ENCODE measurements at regions of chr1 and their contacts with region 1.

Region 1: DNA sequence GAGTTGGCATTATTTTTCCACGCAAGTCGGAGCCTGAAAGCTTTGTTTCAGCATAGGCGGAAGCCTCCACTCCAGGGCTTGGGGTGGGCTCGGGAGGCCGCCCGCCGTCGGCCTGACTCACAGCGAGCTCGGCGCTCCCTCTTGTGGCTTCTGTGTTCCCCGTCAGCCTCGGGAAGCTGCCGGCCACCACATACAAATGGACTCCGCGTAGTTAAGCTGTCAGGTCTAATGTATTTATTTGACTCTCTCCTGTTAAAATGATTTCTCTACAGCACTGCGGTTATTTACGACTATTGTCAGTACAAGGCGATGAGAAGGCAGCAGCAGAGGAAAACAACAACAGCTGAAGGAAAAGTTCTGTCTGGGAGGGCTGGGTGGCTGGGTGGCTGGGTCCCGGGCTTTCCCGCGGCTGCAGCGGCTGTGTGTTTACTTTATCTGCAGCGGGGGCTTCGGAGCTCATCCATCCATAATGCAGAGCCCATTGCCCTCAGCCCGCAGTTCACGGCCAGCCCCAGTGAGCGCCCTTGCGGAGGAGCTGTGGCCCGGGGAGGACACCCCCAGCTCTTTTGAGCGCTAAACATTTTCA is 375.7 kb upstream of the CAMK1G start:
- DNase-seq: peak; percentile 62 to 82
- H3K4me3 ChIP-seq: peak overlapping the region; percentile 24 to 61 (median 50); a peak in 6 of 8 replicates
- H3K27ac ChIP-seq: no peak overlapping the region
- H3K4me1 ChIP-seq: peaks cover 0 to 10% (median 5%) of the 10 kb centered on the region in 4 experiments; a peak in 6 of 7 replicates
- H3K27me3 ChIP-seq: peaks cover 0 to 7% (median 3%) of the 10 kb centered on the region in 4 experiments; a peak in 3 of 7 replicates
- CTCF ChIP-seq: peak; percentile 83 to 91 (median 89)
- EP300 ChIP-seq: no peak
- POLR2A ChIP-seq: no peak
- RAD21 ChIP-seq: peak; percentile 96

Region 2: GRCh38 chr1:208397286-208397685 is 810.5 kb before region 1 on chr1:
- CTCF ChIA-PET with region 1: no interaction called
- POLR2A ChIA-PET with region 1: no interaction called
- DNase-seq: no peak
- H3K4me3 ChIP-seq: no peak overlapping the region
- H3K27ac ChIP-seq: no peak overlapping the region
- H3K4me1 ChIP-seq: no peaks in the 10 kb centered on the region
- H3K27me3 ChIP-seq: no peaks in the 10 kb centered on the region
- CTCF ChIP-seq: no peak
- EP300 ChIP-seq: no peak
- POLR2A ChIP-seq: no peak
- RAD21 ChIP-seq: no peak

Region 3: DNA sequence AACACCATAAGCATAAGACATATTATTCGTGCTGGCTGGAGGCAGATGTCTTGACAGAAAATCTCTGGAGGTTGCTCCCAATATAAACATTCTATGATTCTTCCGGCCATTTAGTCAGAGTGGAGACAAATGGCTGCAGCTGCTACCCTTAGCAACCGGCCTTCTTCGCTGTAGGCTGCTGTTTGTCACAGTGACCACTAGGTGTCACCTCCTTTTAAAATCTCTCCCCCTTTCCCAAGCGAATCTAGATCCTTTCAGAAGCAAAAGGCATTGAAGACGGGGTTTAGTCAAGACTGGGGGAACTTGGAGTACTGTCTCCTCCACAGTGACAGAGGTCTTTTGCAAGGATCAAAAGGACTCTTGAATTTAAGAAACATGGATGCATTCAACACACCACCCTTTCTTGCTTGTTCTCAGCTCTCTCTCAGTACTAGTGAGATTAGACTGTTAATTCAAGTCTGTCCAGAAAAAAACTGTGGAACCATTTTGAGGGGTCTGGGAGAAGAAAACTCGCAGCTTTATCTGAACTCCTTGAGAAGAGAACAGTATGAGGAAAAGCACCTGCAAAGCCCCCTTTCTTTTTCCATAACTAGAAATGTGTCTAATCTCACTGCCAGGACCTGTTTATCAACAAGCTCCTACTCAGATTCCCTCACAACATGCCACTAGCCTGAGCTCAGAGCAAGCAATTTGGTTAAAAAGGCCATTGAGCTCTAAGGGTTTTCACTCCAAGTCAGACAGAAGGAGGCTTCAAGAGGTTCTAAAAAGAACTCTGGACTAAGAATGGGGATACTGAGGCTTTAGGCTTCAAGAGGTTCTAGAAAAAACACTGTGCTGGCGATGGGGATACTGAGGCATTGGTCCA is 555.3 kb before region 1 on chr1:
- CTCF ChIA-PET with region 1: interaction called, 13 read pairs
- POLR2A ChIA-PET with region 1: no interaction called
- DNase-seq: peak; percentile 25 to 53
- H3K4me3 ChIP-seq: no peak overlapping the region
- H3K27ac ChIP-seq: no peak overlapping the region
- H3K4me1 ChIP-seq: no peaks in the 10 kb centered on the region
- H3K27me3 ChIP-seq: no peaks in the 10 kb centered on the region; a peak in 1 of 7 replicates
- CTCF ChIP-seq: peak; percentile 59 to 89 (median 66)
- EP300 ChIP-seq: no peak
- POLR2A ChIP-seq: no peak
- RAD21 ChIP-seq: peak; percentile 80 to 81

Region 4: GRCh38 chr1:209076688-209077087 is 131.1 kb before region 1 on chr1:
- CTCF ChIA-PET with region 1: interaction called, 23 read pairs
- POLR2A ChIA-PET with region 1: no interaction called
- DNase-seq: peak in 1 of 2 experiments; percentile 29
- H3K4me3 ChIP-seq: no peak overlapping the region
- H3K27ac ChIP-seq: no peak overlapping the region
- H3K4me1 ChIP-seq: peaks cover 0 to 5% (median 3%) of the 10 kb centered on the region in 4 experiments; a peak in 4 of 7 replicates
- H3K27me3 ChIP-seq: no peaks in the 10 kb centered on the region
- CTCF ChIP-seq: peak; percentile 28 to 77 (median 63)
- EP300 ChIP-seq: no peak
- POLR2A ChIP-seq: no peak
- RAD21 ChIP-seq: peak; percentile 83 to 86

Region 5: GRCh38 chr1:209190591-209191261 is 17.1 kb before region 1 on chr1:
- CTCF ChIA-PET with region 1: interaction called, 36 read pairs
- POLR2A ChIA-PET with region 1: no interaction called
- DNase-seq: peak; percentile 68 to 84
- H3K4me3 ChIP-seq: no peak overlapping the region
- H3K27ac ChIP-seq: no peak overlapping the region
- H3K4me1 ChIP-seq: peaks cover 0 to 12% (median 6%) of the 10 kb centered on the region in 4 experiments; a peak in 4 of 7 replicates
- H3K27me3 ChIP-seq: no peaks in the 10 kb centered on the region
- CTCF ChIP-seq: peak; percentile 89 to 98 (median 95)
- EP300 ChIP-seq: no peak
- POLR2A ChIP-seq: no peak
- RAD21 ChIP-seq: peak; percentile 94 to 95

Region 6: DNA sequence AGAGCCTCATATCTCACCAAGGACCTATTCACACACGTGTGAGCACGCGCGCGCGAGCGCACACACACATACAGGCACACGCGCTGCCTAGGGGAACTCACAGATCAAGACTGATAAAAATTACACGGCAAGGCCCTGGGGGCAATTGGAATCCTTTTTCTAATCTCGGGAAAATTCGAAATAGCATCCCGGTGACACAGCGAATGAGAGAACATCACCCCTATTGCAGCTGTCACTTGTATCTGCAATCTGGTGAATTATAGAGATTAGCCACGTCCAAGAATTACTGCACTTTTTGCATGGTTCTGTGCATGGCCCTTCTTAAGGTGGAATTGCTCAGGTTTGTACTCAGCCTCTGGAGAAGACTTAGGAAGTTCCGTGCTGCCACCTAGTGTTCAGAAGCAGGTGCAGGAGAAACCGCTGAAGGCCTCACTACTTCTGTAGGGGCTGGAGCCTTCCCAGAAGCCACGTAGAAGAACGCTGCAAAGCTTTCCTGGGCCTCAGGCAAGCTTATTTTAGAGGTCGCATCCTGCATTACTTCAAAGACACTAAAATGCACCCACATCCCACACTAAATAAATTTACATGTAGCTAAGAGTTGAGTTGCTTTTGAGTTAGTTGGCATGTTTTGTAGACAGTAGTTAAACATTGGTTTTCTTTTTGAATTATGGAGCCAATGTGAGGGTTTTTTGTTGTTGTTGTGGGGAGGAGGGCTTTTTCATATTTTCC is 146.5 kb after region 1 on chr1:
- CTCF ChIA-PET with region 1: interaction called, 17 read pairs
- POLR2A ChIA-PET with region 1: no interaction called
- DNase-seq: peak; percentile 71 to 78
- H3K4me3 ChIP-seq: no peak overlapping the region
- H3K27ac ChIP-seq: no peak overlapping the region
- H3K4me1 ChIP-seq: peaks cover 0 to 10% (median 1%) of the 10 kb centered on the region in 4 experiments; a peak in 4 of 7 replicates
- H3K27me3 ChIP-seq: no peaks in the 10 kb centered on the region
- CTCF ChIP-seq: peak; percentile 77 to 91 (median 81)
- EP300 ChIP-seq: no peak
- POLR2A ChIP-seq: no peak
- RAD21 ChIP-seq: peak; percentile 89 to 93

Region 7: GRCh38 chr1:209490013-209490412 is 282.2 kb after region 1 on chr1:
- CTCF ChIA-PET with region 1: interaction called, 21 read pairs
- POLR2A ChIA-PET with region 1: no interaction called
- DNase-seq: no peak
- H3K4me3 ChIP-seq: no peak overlapping the region
- H3K27ac ChIP-seq: no peak overlapping the region
- H3K4me1 ChIP-seq: no peaks in the 10 kb centered on the region; a peak in 1 of 7 replicates
- H3K27me3 ChIP-seq: peaks cover 0 to 1% (median 0%) of the 10 kb centered on the region in 4 experiments; a peak in 1 of 7 replicates
- CTCF ChIP-seq: peak in 2 of 3 experiments; percentile 25 to 50; a peak in 2 of 4 replicates
- EP300 ChIP-seq: no peak
- POLR2A ChIP-seq: no peak
- RAD21 ChIP-seq: peak; percentile 71 to 78

Region 8: DNA sequence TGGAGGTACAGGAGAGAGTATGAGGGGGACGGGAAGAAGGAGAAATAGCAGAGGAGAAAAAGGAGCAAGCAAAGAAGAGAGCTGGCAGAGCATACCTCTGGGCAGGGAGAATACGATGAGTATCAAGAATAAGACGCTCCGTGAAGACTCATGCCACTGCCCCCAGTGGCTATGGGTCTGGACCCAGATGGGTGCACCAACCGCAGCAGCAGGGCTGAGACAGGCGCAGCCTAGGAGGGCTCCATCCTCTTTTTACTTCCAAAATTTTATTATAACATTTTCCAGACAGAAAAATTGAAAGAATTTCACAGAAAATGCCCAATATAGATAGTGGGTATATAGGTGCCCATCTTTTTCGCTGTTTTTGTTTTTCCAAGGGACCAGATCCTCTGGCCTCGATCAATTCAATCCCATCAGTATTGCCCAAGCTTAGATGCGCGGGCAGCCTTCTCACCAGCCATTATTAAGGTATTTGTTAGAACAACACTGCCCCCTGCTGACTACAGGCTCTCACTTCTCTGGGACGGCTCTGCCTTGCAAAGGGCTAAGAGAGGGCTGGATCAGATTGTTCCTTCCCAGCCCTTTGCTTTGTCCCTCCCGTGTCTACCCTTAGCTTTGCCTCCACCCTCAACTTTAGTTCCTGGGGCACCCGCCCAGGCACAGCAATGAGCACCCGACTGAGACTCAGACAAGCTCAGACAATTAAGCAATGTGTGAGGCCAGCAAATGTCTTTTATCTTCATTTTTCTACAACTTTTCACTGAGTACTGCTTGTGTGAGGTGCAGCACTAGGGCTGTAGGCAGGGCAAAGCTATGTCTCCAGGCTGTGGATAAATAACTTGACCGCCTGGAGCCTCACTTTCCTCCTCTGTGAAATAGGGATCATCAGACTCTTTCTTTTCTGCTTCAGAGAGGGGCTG is 358.2 kb after region 1 on chr1:
- CTCF ChIA-PET with region 1: interaction called, 30 read pairs
- POLR2A ChIA-PET with region 1: no interaction called
- DNase-seq: peak; percentile 75 to 92
- H3K4me3 ChIP-seq: no peak overlapping the region
- H3K27ac ChIP-seq: no peak overlapping the region
- H3K4me1 ChIP-seq: peaks cover 0 to 4% (median 2%) of the 10 kb centered on the region in 4 experiments; a peak in 4 of 7 replicates
- H3K27me3 ChIP-seq: no peaks in the 10 kb centered on the region; a peak in 1 of 7 replicates
- CTCF ChIP-seq: peak; percentile 65 to 88 (median 76)
- EP300 ChIP-seq: no peak
- POLR2A ChIP-seq: no peak
- RAD21 ChIP-seq: peak; percentile 82 to 88

Region 9: GRCh38 chr1:209659909-209660308 is 452.1 kb after region 1 on chr1:
- CTCF ChIA-PET with region 1: no interaction called
- POLR2A ChIA-PET with region 1: no interaction called
- DNase-seq: no peak
- H3K4me3 ChIP-seq: no peak overlapping the region
- H3K27ac ChIP-seq: no peak overlapping the region
- H3K4me1 ChIP-seq: peaks cover 0 to 3% (median 0%) of the 10 kb centered on the region in 4 experiments; a peak in 2 of 7 replicates
- H3K27me3 ChIP-seq: 0 out of 7 replicates have a peak, but pooled peaks cover 0 to 2% (median 0%) of the 10 kb centered on the region in 4 experiments
- CTCF ChIP-seq: no peak
- EP300 ChIP-seq: no peak
- POLR2A ChIP-seq: no peak
- RAD21 ChIP-seq: no peak